CD4-positive, alpha-beta memory T cell (primary cell): ENCODE measurements at regions of chr18 and their contacts with region 1.

Region 1: DNA sequence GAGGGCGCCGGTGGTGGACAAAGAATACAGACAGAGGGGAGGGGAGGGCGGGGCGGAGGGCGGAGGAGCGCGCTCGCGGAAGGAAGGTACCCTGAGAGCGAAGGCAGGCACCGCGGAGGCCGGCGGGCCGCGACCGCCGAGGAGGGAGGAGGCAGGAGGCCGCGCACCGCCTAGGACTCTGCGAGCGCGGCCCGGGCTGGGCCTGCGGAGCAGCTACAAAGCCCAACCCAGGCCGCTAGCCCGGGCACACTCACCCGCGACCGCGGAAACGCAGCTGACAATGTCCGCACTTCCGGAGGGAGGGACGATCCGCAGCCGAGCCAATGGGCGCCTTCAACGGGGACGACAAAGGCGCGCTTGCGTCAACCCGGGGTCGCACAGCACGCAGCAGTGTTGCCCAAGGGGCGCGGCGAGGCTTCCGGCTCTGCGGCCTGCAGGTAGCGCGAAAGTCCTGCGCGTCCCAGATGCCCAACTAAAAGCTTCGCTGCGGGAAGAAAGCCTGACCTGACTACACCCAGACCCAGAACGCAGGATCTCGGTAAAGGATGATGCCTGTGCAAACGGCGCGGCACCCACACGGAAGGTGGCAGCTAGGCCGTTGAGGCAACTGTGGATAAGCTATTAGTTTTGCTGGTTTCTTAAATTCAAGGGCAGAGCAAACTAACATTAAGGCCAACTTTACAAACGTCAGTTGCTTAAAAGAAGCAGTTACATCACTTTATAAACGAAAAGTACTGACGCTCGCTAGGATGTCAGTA is at the start of gene C18orf32:
- DNase-seq: peak; percentile 93 to 97 (median 94)
- H3K4me3 ChIP-seq: peak within 1 kb of the TSS; percentile 66 to 71
- H3K4me3 Mint-ChIP-seq: peak within 1 kb of the TSS; percentile 91 to 99 (median 96)
- H3K27ac ChIP-seq: peak within 1 kb of the TSS; percentile 81
- H3K27ac Mint-ChIP-seq: peak within 1 kb of the TSS; percentile 93 to 100 (median 98)
- H3K4me1 ChIP-seq: peaks cover 66% of the 10 kb centered on the region
- H3K4me1 Mint-ChIP-seq: peaks cover 49 to 82% (median 63%) of the 10 kb centered on the region in 4 donors
- H3K27me3 ChIP-seq: no peaks in the 10 kb centered on the region
- H3K27me3 Mint-ChIP-seq: no peaks in the 10 kb centered on the region
- total RNA-seq, gene C18orf32: 48.7 to 55.3 TPM

Region 2: DNA sequence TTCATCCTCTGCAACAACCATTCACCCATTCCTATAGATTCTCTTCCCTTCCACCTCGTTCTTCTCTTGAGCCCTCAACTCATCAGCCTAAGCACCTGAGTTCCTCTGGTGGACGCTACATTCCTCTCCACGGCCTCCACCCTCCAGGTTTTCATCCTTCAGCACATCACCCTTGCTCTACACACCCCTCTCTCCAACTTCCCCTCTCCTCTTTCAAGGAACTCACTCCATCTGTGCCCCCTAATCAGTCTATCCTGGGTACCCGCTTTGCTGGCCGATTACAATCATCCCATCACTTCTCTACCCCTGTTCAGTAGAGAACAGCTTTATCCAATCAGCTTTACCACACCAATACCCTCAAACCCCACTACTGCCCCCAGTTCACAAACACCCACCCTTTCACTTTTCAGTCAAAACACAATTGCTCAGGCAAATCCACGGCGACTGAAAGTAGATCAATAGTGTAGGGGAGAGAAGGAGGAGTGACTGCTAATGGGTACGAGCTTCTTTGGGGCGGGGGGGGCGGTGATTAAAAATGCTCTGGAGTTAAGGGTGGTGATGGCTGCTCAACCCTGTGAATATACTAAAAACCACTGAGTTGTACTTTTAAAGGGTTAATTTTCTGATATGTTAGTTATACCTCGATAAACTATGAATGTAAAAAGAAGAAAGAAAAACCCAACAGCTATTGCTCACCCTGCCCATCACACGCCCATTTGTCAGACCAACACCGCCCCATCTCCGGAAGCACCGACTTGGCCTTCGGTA is 27.5 kb before region 1 on chr18:
- CTCF ChIA-PET with region 1: no interaction called
- POLR2A ChIA-PET with region 1: interaction called, 81 read pairs
- intact Hi-C with region 1: loop called (anchors 1 kb)
- DNase-seq: peak in 4 of 5 donors; percentile 16 to 53 (median 26)
- H3K4me3 ChIP-seq: peak overlapping the region; percentile 43 to 89
- H3K4me3 Mint-ChIP-seq: peak overlapping the region; percentile 86 to 95 (median 91)
- H3K27ac ChIP-seq: peak overlapping the region; percentile 85
- H3K27ac Mint-ChIP-seq: peak overlapping the region; percentile 67 to 93 (median 90)
- H3K4me1 ChIP-seq: peaks cover 45% of the 10 kb centered on the region
- H3K4me1 Mint-ChIP-seq: peaks cover 34 to 61% (median 44%) of the 10 kb centered on the region in 4 donors
- H3K27me3 ChIP-seq: no peaks in the 10 kb centered on the region
- H3K27me3 Mint-ChIP-seq: no peaks in the 10 kb centered on the region

Region 3: DNA sequence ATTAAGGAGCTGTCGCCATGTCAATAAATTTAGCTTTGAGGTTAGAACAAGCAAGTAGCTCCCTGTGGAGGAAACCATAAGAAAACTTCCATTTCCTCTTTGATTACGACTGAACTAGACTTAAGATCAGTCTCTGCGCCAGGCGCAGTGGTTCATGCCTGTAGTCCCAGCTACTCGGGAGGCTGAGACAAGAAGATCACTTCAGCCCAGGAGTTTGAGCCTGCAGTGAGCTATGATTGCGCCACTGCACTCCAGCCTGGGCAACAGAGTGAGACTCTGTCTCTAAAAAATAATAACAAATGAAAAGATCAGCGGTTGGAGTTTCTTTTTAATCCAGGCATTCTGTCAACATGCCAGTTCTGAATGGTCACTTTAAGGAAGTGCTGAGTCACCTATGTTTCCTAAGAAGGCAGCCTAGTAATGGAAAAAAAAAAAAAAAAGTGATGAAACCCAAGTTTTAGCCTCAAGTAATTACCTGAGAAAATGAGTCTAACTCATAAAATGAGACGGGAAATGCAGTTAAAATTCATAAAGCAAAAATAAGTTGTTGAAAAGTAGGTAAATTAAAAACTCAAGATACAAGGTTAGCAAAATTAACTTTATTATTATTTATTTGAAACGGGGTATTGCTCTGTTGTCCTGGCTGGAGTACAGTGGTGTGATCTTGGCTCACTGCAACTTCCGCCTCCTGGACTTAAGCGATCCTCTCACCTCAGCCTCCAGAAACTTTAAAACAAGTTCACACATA is 10.3 kb before region 1 on chr18:
- CTCF ChIA-PET with region 1: interaction called, 3 read pairs
- POLR2A ChIA-PET with region 1: interaction called, 20 read pairs
- intact Hi-C with region 1: no loop called
- DNase-seq: no peak
- H3K4me3 ChIP-seq: no peak overlapping the region
- H3K4me3 Mint-ChIP-seq: no peak overlapping the region
- H3K27ac ChIP-seq: no peak overlapping the region
- H3K27ac Mint-ChIP-seq: peak overlapping the region in 1 of 7 donors; percentile 41
- H3K4me1 ChIP-seq: no peaks in the 10 kb centered on the region
- H3K4me1 Mint-ChIP-seq: peaks cover 0 to 5% (median 4%) of the 10 kb centered on the region in 4 donors
- H3K27me3 ChIP-seq: no peaks in the 10 kb centered on the region
- H3K27me3 Mint-ChIP-seq: no peaks in the 10 kb centered on the region

Region 4: GRCh38 chr18:49819823-49820671 is 332.9 kb after region 1 on chr18:
- CTCF ChIA-PET with region 1: no interaction called
- POLR2A ChIA-PET with region 1: interaction called, 12 read pairs
- intact Hi-C with region 1: no loop called
- DNase-seq: peak; percentile 74 to 82 (median 77)
- H3K4me3 ChIP-seq: peak overlapping the region in 1 of 2 donors; percentile 25
- H3K4me3 Mint-ChIP-seq: peak overlapping the region; percentile 67 to 84 (median 76)
- H3K27ac ChIP-seq: peak overlapping the region; percentile 36
- H3K27ac Mint-ChIP-seq: peak overlapping the region; percentile 86 to 93 (median 87)
- H3K4me1 ChIP-seq: peaks cover 53% of the 10 kb centered on the region
- H3K4me1 Mint-ChIP-seq: peaks cover 43 to 67% (median 54%) of the 10 kb centered on the region in 4 donors
- H3K27me3 ChIP-seq: no peaks in the 10 kb centered on the region
- H3K27me3 Mint-ChIP-seq: no peaks in the 10 kb centered on the region

Region 5: GRCh38 chr18:50281295-50281971 is 794.3 kb after region 1 on chr18 and contains the start of gene MBD1:
- CTCF ChIA-PET with region 1: no interaction called
- POLR2A ChIA-PET with region 1: interaction called, 6 read pairs
- intact Hi-C with region 1: loop called (anchors 1 kb)
- DNase-seq: peak; percentile 97 to 99 (median 98)
- H3K4me3 ChIP-seq: peak within 1 kb of the TSS; percentile 45 to 97
- H3K4me3 Mint-ChIP-seq: peak within 1 kb of the TSS; percentile 96 to 99 (median 98)
- H3K27ac ChIP-seq: peak within 1 kb of the TSS; percentile 95
- H3K27ac Mint-ChIP-seq: peak within 1 kb of the TSS; percentile 88 to 99 (median 98)
- H3K4me1 ChIP-seq: peaks cover 36% of the 10 kb centered on the region
- H3K4me1 Mint-ChIP-seq: peaks cover 31 to 59% (median 47%) of the 10 kb centered on the region in 4 donors
- H3K27me3 ChIP-seq: no peaks in the 10 kb centered on the region
- H3K27me3 Mint-ChIP-seq: no peaks in the 10 kb centered on the region
- total RNA-seq, gene MBD1: 135 to 144 TPM

Region 6: GRCh38 chr18:50374753-50375391 is 887.7 kb after region 1 on chr18 and contains the start of gene SKA1:
- CTCF ChIA-PET with region 1: no interaction called
- POLR2A ChIA-PET with region 1: no interaction called
- intact Hi-C with region 1: loop called (anchors 2 kb)
- DNase-seq: peak; percentile 89 to 91 (median 90)
- H3K4me3 ChIP-seq: peak within 1 kb of the TSS; percentile 60 to 63
- H3K4me3 Mint-ChIP-seq: peak within 1 kb of the TSS; percentile 79 to 85 (median 82)
- H3K27ac ChIP-seq: peak within 1 kb of the TSS; percentile 57
- H3K27ac Mint-ChIP-seq: peak within 1 kb of the TSS; percentile 81 to 94 (median 91)
- H3K4me1 ChIP-seq: peaks cover 14% of the 10 kb centered on the region
- H3K4me1 Mint-ChIP-seq: peaks cover 6 to 15% (median 11%) of the 10 kb centered on the region in 4 donors
- H3K27me3 ChIP-seq: peaks cover 5% of the 10 kb centered on the region
- H3K27me3 Mint-ChIP-seq: peaks cover 6 to 10% of the 10 kb centered on the region in 2 donors
- total RNA-seq, gene SKA1: 0.28 to 0.47 TPM